Upper lobe of right lung (tissue), 1 donor: ENCODE measurements at regions of chr3 and their contacts with region 1.

Region 1: GRCh38 chr3:79027593-79027992 is 740.2 kb downstream of the ROBO1 start:
- DNase-seq: no peak
- ATAC-seq: no peak
- H3K4me3 ChIP-seq: no peak overlapping the region
- H3K27ac ChIP-seq: no peak overlapping the region
- H3K4me1 ChIP-seq: no peaks in the 10 kb centered on the region
- H3K27me3 ChIP-seq: no peaks in the 10 kb centered on the region
- CTCF ChIP-seq: no peak

Region 2: DNA sequence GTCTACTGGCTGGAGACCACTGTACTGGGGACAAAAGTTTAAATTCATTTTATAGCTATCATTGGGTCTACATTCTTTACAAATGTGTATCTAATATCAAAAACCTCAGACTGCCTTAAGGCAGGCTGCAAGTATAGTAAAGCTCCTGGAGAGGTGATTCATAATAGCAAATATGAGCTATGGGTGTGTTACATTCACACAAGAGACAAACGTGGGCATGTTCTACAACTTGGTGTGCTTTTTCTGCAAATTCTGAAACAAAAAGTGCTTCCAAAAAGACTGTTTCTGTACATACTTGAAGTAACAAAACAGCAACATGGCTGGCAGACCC is 361.2 kb before region 1 on chr3:
- intact Hi-C with region 1: loop called (anchors 5 kb)
- DNase-seq: no peak
- ATAC-seq: no peak
- H3K4me3 ChIP-seq: no peak overlapping the region
- H3K27ac ChIP-seq: no peak overlapping the region
- H3K4me1 ChIP-seq: no peaks in the 10 kb centered on the region
- H3K27me3 ChIP-seq: no peaks in the 10 kb centered on the region
- CTCF ChIP-seq: no peak

Region 3: DNA sequence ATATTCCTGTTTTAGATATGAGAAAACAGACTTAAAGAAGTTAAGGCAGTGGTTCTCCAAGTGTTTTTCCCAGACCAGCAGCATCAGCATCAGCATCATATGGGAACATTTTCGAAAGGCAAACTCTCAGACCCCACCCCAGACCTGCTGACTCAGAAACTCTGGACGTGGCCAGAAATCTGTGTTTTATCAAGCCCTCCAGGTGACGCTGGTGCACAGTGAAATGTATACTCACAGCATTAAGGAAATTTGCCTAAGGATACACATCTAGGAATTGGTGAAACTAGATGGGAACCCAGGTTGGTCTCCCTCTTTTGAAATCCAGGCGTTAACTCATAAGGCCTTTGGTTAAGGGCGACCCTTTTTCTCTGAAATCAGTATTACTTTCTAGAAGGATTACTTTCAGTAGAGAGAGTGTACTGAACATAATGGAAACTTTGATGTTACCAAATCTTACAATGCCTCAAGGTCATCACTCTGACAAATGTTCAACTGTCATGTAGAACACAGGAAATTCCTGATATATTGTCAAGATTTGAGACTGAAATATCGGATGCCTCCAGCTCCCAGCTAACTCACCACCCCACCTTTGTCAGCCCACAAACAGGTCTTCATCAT is 170.0 kb before region 1 on chr3:
- intact Hi-C with region 1: no loop called
- DNase-seq: no peak
- ATAC-seq: no peak
- H3K4me3 ChIP-seq: no peak overlapping the region
- H3K27ac ChIP-seq: no peak overlapping the region
- H3K4me1 ChIP-seq: no peaks in the 10 kb centered on the region
- H3K27me3 ChIP-seq: no peaks in the 10 kb centered on the region
- CTCF ChIP-seq: no peak

Region 4: DNA sequence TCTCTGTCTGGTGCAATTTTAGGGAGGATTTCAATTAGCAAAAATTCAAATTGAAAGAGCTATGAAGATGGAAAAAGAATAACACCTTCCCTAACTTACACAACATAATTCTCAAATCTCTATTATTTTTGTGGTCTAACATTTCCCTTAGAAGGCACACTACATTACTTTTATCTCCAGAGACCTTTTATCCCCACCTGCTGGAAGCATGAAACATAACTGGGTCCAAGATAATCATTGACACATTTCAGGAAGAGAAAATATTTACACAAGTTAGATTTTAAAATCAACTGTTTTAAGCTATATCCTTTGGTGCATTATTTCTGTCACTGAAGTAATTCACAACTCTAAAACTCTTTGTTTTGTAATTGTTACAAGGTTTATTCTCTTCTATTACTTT is 39.3 kb before region 1 on chr3:
- intact Hi-C with region 1: no loop called
- DNase-seq: no peak
- ATAC-seq: no peak
- H3K4me3 ChIP-seq: no peak overlapping the region
- H3K27ac ChIP-seq: no peak overlapping the region
- H3K4me1 ChIP-seq: no peaks in the 10 kb centered on the region
- H3K27me3 ChIP-seq: no peaks in the 10 kb centered on the region
- CTCF ChIP-seq: peak; percentile 30

Region 5: DNA sequence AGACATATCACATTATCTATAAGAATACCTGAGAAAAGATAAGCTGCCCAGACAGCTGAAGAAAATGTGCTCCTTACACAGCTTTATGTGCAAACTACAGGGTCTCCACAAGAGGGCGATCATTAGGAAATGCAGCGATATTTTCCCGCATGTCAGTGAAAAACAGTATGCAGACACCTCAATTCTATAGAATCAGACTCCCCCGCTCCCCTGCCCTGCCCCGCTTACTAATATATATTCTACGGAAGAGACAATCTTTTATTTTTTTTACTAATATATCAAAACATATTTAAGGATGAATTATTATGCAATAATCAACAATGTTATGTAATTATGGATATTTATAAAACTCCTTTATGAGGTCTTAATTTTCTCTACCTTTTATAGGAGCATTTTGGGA is 58.9 kb after region 1 on chr3:
- intact Hi-C with region 1: no loop called
- DNase-seq: no peak
- ATAC-seq: peak; percentile 76
- H3K4me3 ChIP-seq: no peak overlapping the region
- H3K27ac ChIP-seq: no peak overlapping the region
- H3K4me1 ChIP-seq: no peaks in the 10 kb centered on the region
- H3K27me3 ChIP-seq: no peaks in the 10 kb centered on the region
- CTCF ChIP-seq: peak; percentile 75

Region 6: DNA sequence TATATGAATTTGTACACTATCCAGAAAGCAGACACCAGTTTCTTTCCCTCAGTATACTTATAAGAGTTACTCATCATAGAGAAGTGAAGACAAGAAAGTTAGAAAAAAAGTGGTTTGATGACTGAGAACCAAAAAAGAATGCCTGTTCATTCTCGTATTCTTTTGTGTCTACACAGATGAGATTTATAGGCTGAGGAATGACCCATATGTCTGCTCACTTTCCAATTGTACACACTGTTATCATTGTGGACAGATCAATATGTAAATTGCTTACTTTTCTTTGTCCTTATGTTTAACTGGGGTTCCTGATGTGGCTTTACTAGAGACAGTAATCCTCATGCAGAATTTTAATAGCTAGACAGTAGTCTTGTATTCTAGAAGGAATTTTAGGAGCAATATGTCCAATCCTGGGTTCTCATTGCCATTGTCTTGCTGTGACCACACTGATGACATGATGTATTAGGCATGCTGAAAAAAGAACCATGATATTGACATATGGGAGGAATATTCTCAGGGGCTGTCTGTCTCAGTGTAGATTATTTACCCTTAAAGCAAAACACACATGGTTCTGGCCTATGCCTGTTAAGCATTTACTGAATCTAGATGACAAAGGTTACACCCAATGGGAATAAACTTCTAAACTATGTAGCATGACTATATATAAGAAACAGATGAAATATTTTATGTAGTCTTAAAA is 70.5 kb after region 1 on chr3:
- intact Hi-C with region 1: no loop called
- DNase-seq: no peak
- ATAC-seq: no peak
- H3K4me3 ChIP-seq: no peak overlapping the region
- H3K27ac ChIP-seq: no peak overlapping the region
- H3K4me1 ChIP-seq: no peaks in the 10 kb centered on the region
- H3K27me3 ChIP-seq: no peaks in the 10 kb centered on the region
- CTCF ChIP-seq: no peak